Endothelial cell of umbilical vein (primary cell): ENCODE measurements at regions of chr19 and their contacts with region 1.

Region 1: DNA sequence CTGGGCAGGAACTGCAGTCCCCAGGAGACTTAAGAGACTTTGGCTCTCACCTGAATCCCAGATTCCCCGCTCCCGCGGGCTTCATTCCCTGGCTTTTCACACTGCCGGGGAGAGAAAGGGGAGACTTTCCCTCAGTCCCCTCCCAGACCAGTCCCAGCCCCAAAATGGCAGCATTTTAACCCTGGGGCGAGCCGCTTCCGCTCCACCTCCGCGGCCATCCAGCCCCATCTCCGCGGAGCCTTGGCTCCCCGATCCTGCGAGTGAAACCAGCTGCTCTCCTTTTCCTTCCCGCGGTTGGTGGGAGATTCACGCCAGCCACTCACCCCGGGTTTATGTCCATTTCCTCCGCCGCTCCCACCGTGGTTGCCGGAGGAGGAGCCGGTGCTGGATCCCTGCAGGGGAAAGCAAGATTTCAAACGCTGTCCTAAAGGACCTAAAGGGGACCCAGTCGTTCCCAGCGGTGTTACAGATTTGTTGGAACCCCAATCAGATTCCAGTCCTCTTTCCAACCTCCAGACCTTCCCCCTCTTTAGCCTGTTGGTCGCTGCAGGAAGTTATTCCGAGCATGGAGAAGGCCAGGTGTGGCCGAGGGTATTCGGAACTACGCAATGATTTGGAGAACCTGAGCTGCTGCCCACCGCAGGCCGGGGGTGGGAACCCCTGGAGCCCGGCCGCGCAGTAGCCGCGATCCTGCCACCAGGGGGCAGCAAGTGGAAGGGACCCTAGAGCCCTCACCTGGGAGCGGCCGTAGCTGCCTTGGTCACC is 3.4 kb downstream of the DMKN start:
- DNase-seq: peak; percentile 30
- H3K4me3 ChIP-seq: no peak overlapping the region
- H3K27ac ChIP-seq: no peak overlapping the region
- H3K4me1 ChIP-seq: no peaks in the 10 kb centered on the region
- H3K27me3 ChIP-seq: peaks cover 33 to 40% of the 10 kb centered on the region in 2 experiments
- CTCF ChIP-seq: peak; percentile 88 to 94
- POLR2A ChIP-seq: no peak

Region 2: GRCh38 chr19:35559281-35559659 is 49.2 kb after region 1 on chr19:
- CTCF ChIA-PET with region 1: no interaction called
- POLR2A ChIA-PET with region 1: no interaction called
- dilution Hi-C with region 1: no loop called
- intact Hi-C with region 1: no loop called
- DNase-seq: no peak
- H3K4me3 ChIP-seq: no peak overlapping the region
- H3K27ac ChIP-seq: no peak overlapping the region
- H3K4me1 ChIP-seq: no peaks in the 10 kb centered on the region
- H3K27me3 ChIP-seq: peaks cover 0 to 4% of the 10 kb centered on the region in 2 experiments
- CTCF ChIP-seq: no peak
- POLR2A ChIP-seq: no peak

Region 3: DNA sequence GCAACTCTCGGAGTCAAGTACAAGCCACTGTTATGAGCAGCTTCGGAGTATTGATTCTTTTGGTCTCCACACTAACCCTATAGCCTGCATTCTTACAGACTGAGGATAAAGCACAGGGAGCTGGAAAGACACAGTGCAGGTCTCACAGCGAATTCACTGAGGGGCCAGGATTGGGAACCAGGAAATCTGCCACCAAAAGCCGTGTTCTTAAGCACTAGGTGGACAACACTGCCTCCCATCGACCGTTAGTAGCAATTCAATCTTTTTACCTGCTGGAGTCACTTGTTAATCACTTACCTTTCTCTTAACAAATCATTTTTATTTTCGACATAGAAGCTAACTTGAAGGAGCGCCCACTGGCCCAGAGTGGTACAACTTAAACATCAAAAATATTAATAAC is 82.2 kb after region 1 on chr19:
- CTCF ChIA-PET with region 1: interaction called, 9 read pairs
- POLR2A ChIA-PET with region 1: no interaction called
- dilution Hi-C with region 1: no loop called
- intact Hi-C with region 1: loop called (anchors 1 kb)
- DNase-seq: peak; percentile 25
- H3K4me3 ChIP-seq: no peak overlapping the region
- H3K27ac ChIP-seq: no peak overlapping the region
- H3K4me1 ChIP-seq: no peaks in the 10 kb centered on the region
- H3K27me3 ChIP-seq: no peaks in the 10 kb centered on the region
- CTCF ChIP-seq: peak; percentile 31 to 33
- POLR2A ChIP-seq: no peak